ENCODE measurements at regions of chr14 and their contacts with region 1.

Region 1: GRCh38 chr14:100654814-100655740 is 67.9 kb upstream of the BEGAIN start:
- DNase-seq: peak in 1 of 2 experiments; percentile 83
- H3K4me3 ChIP-seq: peak overlapping the region; percentile 12 to 51 (median 24); a peak in 6 of 8 replicates
- H3K27ac ChIP-seq: no peak overlapping the region
- H3K4me1 ChIP-seq: peaks cover 0 to 17% (median 7%) of the 10 kb centered on the region in 4 experiments; a peak in 5 of 7 replicates
- H3K27me3 ChIP-seq: peaks cover 0 to 8% (median 1%) of the 10 kb centered on the region in 4 experiments; a peak in 2 of 7 replicates
- CTCF ChIP-seq: peak; percentile 81 to 96 (median 86)
- EP300 ChIP-seq: no peak
- POLR2A ChIP-seq: no peak
- RAD21 ChIP-seq: peak; percentile 64 to 79

Region 2: DNA sequence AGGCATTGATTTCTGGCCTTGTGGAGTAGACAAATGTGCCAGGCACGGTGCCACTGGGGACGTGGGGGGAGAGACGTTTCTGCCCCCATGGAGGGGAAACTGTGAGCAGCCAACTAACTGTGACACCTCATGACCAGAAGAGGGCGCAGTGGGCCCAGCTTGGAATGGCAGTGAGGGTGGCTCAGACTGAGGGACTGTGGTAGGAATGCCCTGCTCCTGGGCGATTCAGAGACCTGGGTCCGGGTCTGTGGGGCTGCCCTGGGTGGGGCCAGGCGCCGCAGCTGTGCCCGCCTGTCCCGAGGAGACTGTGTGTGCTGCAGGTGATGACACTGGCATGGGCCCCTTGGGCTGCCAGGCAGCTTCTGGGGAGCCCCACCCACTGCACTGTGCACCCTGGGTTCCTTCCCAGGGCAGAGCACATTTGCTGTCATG is 271.3 kb before region 1 on chr14:
- CTCF ChIA-PET with region 1: interaction called, 109 read pairs
- POLR2A ChIA-PET with region 1: no interaction called
- DNase-seq: peak in 1 of 2 experiments; percentile 87
- H3K4me3 ChIP-seq: no peak overlapping the region
- H3K27ac ChIP-seq: no peak overlapping the region
- H3K4me1 ChIP-seq: peaks cover 0 to 9% (median 0%) of the 10 kb centered on the region in 4 experiments; a peak in 3 of 7 replicates
- H3K27me3 ChIP-seq: no peaks in the 10 kb centered on the region
- CTCF ChIP-seq: peak; percentile 93 to 97 (median 97)
- EP300 ChIP-seq: no peak
- POLR2A ChIP-seq: no peak
- RAD21 ChIP-seq: peak; percentile 88 to 89

Region 3: DNA sequence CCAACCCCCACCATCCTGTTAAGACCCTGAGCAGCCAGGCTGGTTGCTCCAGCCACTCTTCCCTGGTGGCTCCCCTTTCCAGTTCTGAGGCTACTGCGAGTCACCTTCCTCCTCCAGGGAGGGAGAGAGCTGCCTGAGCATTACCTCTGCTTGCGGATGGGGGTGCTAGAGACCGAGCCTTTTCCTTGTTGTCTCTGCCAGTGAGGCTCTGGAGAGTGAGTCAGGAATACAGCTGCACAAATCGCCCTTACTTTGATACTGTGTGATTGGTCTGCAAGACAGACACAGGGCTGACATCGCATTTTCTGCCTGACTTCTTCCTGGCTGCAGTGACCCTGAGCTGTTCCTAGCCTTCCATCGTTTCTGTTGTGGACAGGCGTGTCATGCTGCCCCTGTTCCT is 237.6 kb before region 1 on chr14:
- CTCF ChIA-PET with region 1: interaction called, 35 read pairs
- POLR2A ChIA-PET with region 1: no interaction called
- DNase-seq: peak; percentile 58 to 78
- H3K4me3 ChIP-seq: no peak overlapping the region
- H3K27ac ChIP-seq: no peak overlapping the region
- H3K4me1 ChIP-seq: peaks cover 0 to 9% (median 3%) of the 10 kb centered on the region in 4 experiments; a peak in 5 of 7 replicates
- H3K27me3 ChIP-seq: no peaks in the 10 kb centered on the region
- CTCF ChIP-seq: peak; percentile 83 to 98 (median 84)
- EP300 ChIP-seq: no peak
- POLR2A ChIP-seq: no peak
- RAD21 ChIP-seq: peak; percentile 90 to 92

Region 4: DNA sequence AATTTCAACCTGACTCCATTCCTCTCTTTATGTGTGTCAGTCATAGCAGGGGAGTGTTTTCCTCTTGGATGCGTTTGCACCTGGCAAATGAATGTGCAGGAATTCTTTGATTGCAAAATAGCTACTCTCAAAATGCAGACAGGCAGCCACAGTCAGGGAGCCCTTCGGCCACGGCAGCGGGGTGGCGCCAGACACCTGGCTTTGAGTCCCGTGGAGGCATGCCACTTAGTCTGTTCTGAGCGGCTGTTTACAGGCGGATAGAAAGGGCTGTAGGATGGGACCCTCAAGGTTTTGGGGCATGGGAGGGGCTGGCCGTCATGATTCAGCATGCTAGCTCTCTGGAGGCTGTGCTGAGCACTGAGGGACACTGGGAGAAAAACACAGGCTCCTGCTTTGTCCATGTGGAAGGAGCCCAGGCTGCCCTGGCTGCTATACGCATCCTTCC is 214.9 kb before region 1 on chr14:
- CTCF ChIA-PET with region 1: interaction called, 16 read pairs
- POLR2A ChIA-PET with region 1: no interaction called
- DNase-seq: peak; percentile 31 to 75
- H3K4me3 ChIP-seq: no peak overlapping the region
- H3K27ac ChIP-seq: no peak overlapping the region
- H3K4me1 ChIP-seq: peaks cover 0 to 6% (median 4%) of the 10 kb centered on the region in 4 experiments; a peak in 4 of 7 replicates
- H3K27me3 ChIP-seq: no peaks in the 10 kb centered on the region
- CTCF ChIP-seq: peak; percentile 79 to 84 (median 79)
- EP300 ChIP-seq: no peak
- POLR2A ChIP-seq: no peak
- RAD21 ChIP-seq: peak; percentile 91 to 92

Region 5: DNA sequence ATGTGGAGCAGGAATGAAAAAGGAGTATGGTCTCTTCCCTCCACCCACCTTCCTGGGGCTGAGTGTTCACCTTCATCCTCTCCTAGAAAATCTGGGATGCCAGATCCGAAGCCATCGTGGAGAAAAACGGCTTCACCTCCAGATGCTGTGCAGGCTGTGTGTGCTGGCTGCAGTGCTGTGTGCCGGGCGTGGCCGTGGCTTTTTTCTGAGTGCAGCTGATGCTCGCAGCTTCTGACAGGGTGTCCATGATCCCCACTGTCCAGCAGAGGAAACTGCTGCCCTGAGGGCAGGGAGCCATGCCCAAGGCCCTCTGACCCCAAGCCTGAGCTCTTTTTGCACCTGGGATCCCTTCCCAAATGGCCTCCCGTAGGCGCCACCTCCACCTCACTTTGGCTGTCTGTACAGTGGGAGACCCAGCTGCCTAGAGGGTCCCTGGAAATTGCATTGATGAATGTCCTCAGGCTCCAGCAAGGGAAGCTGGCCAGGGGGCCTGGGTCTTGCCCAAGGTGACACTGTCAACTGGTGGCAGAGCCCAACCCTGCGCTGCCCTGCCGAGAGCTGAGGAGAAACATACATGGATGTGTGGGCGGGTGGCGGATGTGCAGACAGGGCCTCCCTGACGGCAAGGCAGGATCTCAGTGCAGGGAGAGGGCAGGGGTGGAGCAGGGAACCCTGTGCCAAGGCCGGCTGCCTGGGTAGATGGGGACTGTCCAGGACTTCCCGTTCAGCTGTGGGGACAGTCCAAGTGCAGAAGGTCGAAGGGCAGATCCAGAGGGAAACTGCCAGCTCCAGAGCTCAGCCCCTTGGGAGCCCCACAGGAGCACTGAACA is 121.2 kb before region 1 on chr14:
- CTCF ChIA-PET with region 1: interaction called, 57 read pairs
- POLR2A ChIA-PET with region 1: no interaction called
- DNase-seq: no peak
- H3K4me3 ChIP-seq: no peak overlapping the region
- H3K27ac ChIP-seq: no peak overlapping the region
- H3K4me1 ChIP-seq: peaks cover 0 to 10% (median 0%) of the 10 kb centered on the region in 4 experiments; a peak in 1 of 7 replicates
- H3K27me3 ChIP-seq: no peaks in the 10 kb centered on the region
- CTCF ChIP-seq: no peak
- EP300 ChIP-seq: no peak
- POLR2A ChIP-seq: no peak
- RAD21 ChIP-seq: no peak

Region 6: DNA sequence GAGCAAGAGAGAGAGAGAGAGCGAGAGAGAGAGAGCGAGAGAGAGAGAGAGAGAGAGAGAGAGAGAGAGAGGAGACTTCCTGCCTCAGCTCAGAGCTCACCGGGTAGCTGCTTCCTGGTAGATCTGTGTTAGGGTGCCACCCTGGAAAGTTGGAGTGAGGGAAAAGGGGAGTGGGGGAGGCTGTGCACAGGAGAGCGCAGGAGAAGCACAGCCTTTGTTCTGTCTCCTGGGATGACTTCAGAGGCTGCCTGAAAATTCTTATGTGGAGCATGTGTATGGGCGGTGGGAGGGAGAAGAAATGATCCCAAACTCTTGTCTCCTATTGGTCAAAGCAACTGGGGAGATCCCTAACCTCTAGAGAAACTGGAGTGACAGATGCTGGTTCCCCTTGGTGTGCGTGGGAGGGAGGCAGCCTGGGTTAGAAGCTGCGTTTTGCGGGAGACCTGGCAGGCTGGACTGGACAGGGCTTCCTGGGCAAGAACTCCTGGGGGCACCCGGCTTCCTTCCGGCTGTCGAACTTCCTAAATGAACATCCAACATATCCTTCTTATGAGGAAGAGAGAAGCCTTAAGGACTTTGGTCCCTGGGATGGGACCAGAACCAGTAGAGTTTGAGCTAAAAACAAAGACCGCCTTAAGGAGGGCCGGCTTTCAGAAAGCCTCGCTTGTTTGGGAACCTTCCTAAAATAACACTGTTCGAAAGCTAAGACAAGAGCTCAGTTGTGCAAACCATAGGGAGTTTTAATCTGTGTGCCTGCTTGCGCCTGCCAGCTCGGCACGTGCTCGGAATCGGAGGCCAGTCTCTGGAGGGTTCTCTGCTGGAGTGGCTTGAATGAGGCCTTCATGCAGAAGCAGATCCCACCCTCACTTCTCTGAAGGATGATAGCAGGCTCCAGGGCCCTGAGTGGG is 37.4 kb before region 1 on chr14:
- CTCF ChIA-PET with region 1: interaction called, 24 read pairs
- POLR2A ChIA-PET with region 1: no interaction called
- DNase-seq: no peak
- H3K4me3 ChIP-seq: no peak overlapping the region
- H3K27ac ChIP-seq: no peak overlapping the region
- H3K4me1 ChIP-seq: no peaks in the 10 kb centered on the region; a peak in 1 of 7 replicates
- H3K27me3 ChIP-seq: peaks cover 0 to 6% (median 0%) of the 10 kb centered on the region in 4 experiments; a peak in 2 of 7 replicates
- CTCF ChIP-seq: no peak
- EP300 ChIP-seq: no peak
- POLR2A ChIP-seq: no peak
- RAD21 ChIP-seq: no peak

Region 7: DNA sequence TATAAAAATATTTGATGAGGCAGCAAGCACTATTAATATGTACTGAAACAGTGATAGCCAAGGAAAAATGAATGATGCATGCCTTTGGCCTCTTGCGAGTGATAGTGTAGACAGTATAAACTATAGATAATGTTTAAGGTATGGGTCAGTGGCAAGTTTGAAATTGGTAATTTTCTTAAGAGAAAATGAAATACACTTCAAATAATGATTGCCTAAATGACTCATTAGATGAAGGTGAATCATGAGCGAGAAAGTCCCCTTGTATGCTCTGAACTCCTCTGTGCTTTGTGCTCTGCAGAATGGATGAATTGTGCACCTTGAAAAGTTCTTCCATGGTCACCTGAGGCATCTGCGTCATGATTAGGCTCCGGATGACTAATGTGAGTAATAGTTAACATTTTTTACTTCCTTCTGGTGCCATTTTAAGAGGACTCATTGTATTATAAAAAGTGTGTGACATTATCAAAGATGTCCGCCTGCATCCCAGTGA is 333.4 kb after region 1 on chr14:
- CTCF ChIA-PET with region 1: no interaction called
- POLR2A ChIA-PET with region 1: no interaction called
- DNase-seq: no peak
- H3K4me3 ChIP-seq: no peak overlapping the region
- H3K27ac ChIP-seq: no peak overlapping the region
- H3K4me1 ChIP-seq: no peaks in the 10 kb centered on the region
- H3K27me3 ChIP-seq: no peaks in the 10 kb centered on the region
- CTCF ChIP-seq: no peak
- EP300 ChIP-seq: no peak
- POLR2A ChIP-seq: no peak
- RAD21 ChIP-seq: no peak

Measured in H1 (cell line).